ENCODE measurements at regions of chr12 and their contacts with region 1.

Region 1: GRCh38 chr12:8823565-8824300 is 1.3 kb downstream of the A2ML1 start:
- DNase-seq: peak in 4 of 10 donors; percentile 17 to 25 (median 22)

Region 2: GRCh38 chr12:8681041-8681902 is 142.5 kb before region 1 on chr12:
- intact Hi-C with region 1: loop called (anchors 5 kb)
- DNase-seq: no peak

Region 3: GRCh38 chr12:8969861-8970412 is 146.2 kb after region 1 on chr12:
- intact Hi-C with region 1: no loop called
- DNase-seq: no peak